H1 (cell line): ENCODE measurements at regions of chr6 and their contacts with region 1.

Region 1: GRCh38 chr6:148814082-148814790 is 67.4 kb downstream of the UST start:
- DNase-seq: no peak
- H3K4me3 ChIP-seq: no peak overlapping the region
- H3K27ac ChIP-seq: no peak overlapping the region
- H3K4me1 ChIP-seq: peaks cover 5 to 20% (median 14%) of the 10 kb centered on the region in 4 experiments; a peak in 5 of 7 replicates
- H3K27me3 ChIP-seq: no peaks in the 10 kb centered on the region
- CTCF ChIP-seq: no peak
- EP300 ChIP-seq: no peak
- POLR2A ChIP-seq: no peak
- RAD21 ChIP-seq: 0 out of 4 replicates have a peak, but pooled peaks of 1 of the 2 experiments have one; percentile 17

Region 2: GRCh38 chr6:148793721-148794120 is 20.5 kb before region 1 on chr6:
- CTCF ChIA-PET with region 1: interaction called, 13 read pairs
- POLR2A ChIA-PET with region 1: interaction called, 3 read pairs
- DNase-seq: no peak
- H3K4me3 ChIP-seq: no peak overlapping the region
- H3K27ac ChIP-seq: no peak overlapping the region
- H3K4me1 ChIP-seq: peaks cover 0 to 8% (median 1%) of the 10 kb centered on the region in 4 experiments; a peak in 3 of 7 replicates
- H3K27me3 ChIP-seq: no peaks in the 10 kb centered on the region
- CTCF ChIP-seq: no peak
- EP300 ChIP-seq: no peak
- POLR2A ChIP-seq: no peak
- RAD21 ChIP-seq: no peak